ENCODE measurements at regions of chr6 and their contacts with region 1.

Region 1: DNA sequence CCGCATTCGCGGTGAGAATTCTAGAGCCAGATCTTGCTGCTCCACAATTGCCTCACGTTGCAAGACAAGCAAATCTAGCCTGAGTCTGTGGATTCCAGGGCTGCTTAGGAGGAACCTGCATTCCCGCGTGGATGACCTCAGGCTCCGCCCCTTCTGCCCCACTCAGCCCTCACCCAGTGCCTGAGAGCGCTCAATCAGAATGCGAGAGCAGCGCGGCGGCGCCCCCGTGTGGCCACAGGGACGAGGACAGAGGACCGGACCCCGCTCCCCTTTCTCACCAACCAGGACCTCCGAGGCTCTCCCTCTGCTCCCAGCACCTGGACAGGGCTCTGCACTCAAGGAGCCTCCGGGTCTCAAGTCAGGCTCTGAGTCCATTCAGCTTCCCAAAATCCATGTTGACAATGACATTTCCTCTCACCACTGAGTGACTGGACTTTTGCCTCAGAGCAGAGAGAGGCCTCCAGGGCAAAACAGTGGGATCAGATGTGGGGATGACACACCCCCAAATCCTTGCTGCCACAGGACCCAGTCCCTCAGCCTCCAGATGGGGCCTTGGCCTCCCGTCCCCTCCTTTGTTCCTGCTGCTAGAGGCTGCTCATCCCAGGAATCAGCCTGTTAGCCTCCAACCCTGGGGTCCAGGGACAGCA is 52.0 kb downstream of the RPP21 start:
- DNase-seq: peak; percentile 88
- ATAC-seq: peak; percentile 99
- H3K4me3 Mint-ChIP-seq: no peak overlapping the region
- H3K27ac Mint-ChIP-seq: no peak overlapping the region
- H3K4me1 Mint-ChIP-seq: no peaks in the 10 kb centered on the region
- H3K27me3 Mint-ChIP-seq: peaks cover 39% of the 10 kb centered on the region

Region 2: GRCh38 chr6:30238174-30238795 is 158.7 kb before region 1 on chr6:
- CTCF ChIA-PET with region 1: interaction called, 27 read pairs
- POLR2A ChIA-PET with region 1: no interaction called
- DNase-seq: peak; percentile 51
- ATAC-seq: peak; percentile 78
- H3K4me3 Mint-ChIP-seq: no peak overlapping the region
- H3K27ac Mint-ChIP-seq: no peak overlapping the region
- H3K4me1 Mint-ChIP-seq: no peaks in the 10 kb centered on the region
- H3K27me3 Mint-ChIP-seq: peaks cover 37% of the 10 kb centered on the region

Region 3: GRCh38 chr6:30357678-30358540 is 39.0 kb before region 1 on chr6:
- CTCF ChIA-PET with region 1: interaction called, 23 read pairs
- POLR2A ChIA-PET with region 1: no interaction called
- DNase-seq: peak; percentile 64
- ATAC-seq: peak; percentile 84
- H3K4me3 Mint-ChIP-seq: peak overlapping the region; percentile 71
- H3K27ac Mint-ChIP-seq: no peak overlapping the region
- H3K4me1 Mint-ChIP-seq: peaks cover 7% of the 10 kb centered on the region
- H3K27me3 Mint-ChIP-seq: peaks cover 63% of the 10 kb centered on the region

Region 4: GRCh38 chr6:30376486-30376885 is 20.5 kb before region 1 on chr6:
- CTCF ChIA-PET with region 1: interaction called, 14 read pairs
- POLR2A ChIA-PET with region 1: no interaction called
- DNase-seq: no peak
- ATAC-seq: no peak
- H3K4me3 Mint-ChIP-seq: no peak overlapping the region
- H3K27ac Mint-ChIP-seq: no peak overlapping the region
- H3K4me1 Mint-ChIP-seq: no peaks in the 10 kb centered on the region
- H3K27me3 Mint-ChIP-seq: peaks cover 45% of the 10 kb centered on the region

Measured in activated CD8-positive, alpha-beta T cell treated with anti-CD3 and anti-CD28 coated beads, Interleukin-2, amount 10 ng/mL, durations not matched to agents 7 days and 5 days (primary cell).